Endothelial cell of umbilical vein (primary cell): ENCODE measurements at regions of chr14 and their contacts with region 1.

Region 1: DNA sequence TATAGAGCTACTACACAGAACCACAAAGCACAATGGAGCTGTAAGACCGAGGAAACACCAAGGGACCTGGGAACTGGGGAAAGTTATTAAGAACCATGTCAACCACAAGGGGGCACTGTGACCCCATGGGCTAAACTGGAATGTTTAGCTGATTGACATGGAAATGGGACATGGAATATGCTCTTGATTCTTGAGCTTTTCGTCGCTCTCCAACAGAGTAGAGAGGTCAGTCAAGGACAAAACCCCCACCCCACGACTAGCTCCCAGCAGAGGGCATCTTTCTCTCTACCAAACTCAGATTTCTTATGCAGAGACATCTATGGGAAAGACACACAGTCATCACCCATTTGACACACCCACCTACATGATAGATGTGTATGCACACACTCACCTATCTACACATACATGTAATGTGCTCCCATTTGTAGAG is 10.1 kb downstream of the NDRG2 start:
- DNase-seq: peak; percentile 83
- H3K4me3 ChIP-seq: no peak overlapping the region
- H3K27ac ChIP-seq: no peak overlapping the region
- H3K4me1 ChIP-seq: no peaks in the 10 kb centered on the region
- H3K27me3 ChIP-seq: peaks cover 19 to 23% of the 10 kb centered on the region in 2 experiments
- CTCF ChIP-seq: peak; percentile 77 to 78
- POLR2A ChIP-seq: no peak

Region 2: DNA sequence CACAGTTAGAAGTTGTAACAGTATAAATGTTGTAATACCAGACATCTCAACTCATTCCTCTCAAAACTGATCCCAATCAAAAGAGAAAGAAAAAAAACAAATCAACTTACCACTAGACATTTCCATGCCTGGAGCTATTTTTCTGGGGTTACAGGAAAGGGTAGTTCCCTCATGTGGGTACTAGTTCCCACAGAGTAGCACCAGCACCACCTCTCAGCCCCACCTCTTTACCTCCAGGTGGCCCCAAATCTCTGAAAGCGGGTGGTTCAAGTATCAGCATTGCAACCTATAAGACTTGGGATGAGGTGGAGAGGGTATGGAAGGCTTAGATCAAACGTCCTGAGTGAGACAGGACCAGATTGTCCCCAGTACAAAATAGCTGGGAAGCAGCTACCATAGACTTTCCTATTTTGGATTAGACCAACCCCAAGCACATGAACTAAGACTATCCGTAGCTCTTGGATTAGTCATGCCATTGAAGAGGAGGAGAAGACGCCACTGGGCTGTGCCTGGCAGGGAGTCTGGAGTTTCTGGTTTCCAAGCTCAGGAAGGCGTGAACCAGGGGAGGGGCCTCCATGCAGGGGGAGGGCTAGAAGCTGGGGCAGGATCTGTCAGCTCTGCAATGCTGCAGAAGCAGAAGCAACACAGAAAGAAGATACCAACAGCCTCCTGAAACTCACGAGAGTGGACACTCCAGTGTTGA is 16.0 kb before region 1 on chr14 and contains the start of gene SLC39A2:
- CTCF ChIA-PET with region 1: interaction called, 23 read pairs
- POLR2A ChIA-PET with region 1: no interaction called
- dilution Hi-C with region 1: no loop called
- intact Hi-C with region 1: no loop called
- DNase-seq: no peak
- H3K4me3 ChIP-seq: no peak within 1 kb of the TSS
- H3K27ac ChIP-seq: no peak within 1 kb of the TSS
- H3K4me1 ChIP-seq: no peaks in the 10 kb centered on the region
- H3K27me3 ChIP-seq: no peaks in the 10 kb centered on the region
- CTCF ChIP-seq: no peak
- POLR2A ChIP-seq: no peak
- total RNA-seq, gene SLC39A2: not detected in 2 replicates

Region 3: DNA sequence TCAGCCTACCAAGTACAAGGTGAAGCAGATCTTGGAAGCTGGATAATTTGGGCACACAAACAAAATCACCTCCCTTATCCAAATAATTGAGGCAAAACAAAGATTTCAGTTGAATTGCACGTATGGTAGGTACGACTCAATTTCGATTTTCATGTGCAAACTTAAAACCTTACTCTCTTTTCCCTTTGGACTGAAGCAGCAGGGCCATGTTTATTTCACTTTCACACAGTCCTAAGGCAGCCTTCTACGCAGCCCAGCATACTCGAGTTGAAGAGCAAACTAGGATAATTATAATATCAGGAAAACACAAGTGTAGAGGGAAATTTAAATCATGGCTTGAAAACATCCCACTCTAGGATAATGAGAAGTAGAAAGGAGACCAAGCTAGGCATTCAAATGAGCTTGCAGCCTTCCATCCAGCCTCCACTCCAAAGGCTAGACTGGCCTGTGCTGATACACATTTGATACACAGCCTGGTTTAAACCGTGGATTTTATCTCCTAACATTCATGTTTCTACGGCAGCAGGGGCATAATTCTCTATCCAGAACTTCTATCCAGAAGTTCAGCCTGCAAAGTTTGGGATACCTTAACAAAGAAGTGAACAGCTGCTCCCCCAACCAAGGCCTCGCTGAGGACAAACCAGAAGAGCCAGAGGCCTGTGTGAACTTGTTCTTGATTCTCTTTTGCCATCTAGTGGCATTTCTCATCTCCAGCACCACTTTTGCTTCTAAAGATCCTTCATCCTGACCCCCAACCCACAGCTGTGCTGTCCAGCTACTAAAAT is 25.0 kb after region 1 on chr14:
- CTCF ChIA-PET with region 1: interaction called, 214 read pairs
- POLR2A ChIA-PET with region 1: no interaction called
- dilution Hi-C with region 1: no loop called
- intact Hi-C with region 1: loop called (anchors 1 kb)
- DNase-seq: peak; percentile 46
- H3K4me3 ChIP-seq: no peak overlapping the region
- H3K27ac ChIP-seq: no peak overlapping the region
- H3K4me1 ChIP-seq: peaks cover 4% of the 10 kb centered on the region
- H3K27me3 ChIP-seq: peaks cover 10 to 15% of the 10 kb centered on the region in 2 experiments
- CTCF ChIP-seq: peak; percentile 41 to 59
- POLR2A ChIP-seq: no peak

Region 4: GRCh38 chr14:21071225-21072030 is 56.7 kb after region 1 on chr14:
- CTCF ChIA-PET with region 1: interaction called, 33 read pairs
- POLR2A ChIA-PET with region 1: no interaction called
- dilution Hi-C with region 1: no loop called
- intact Hi-C with region 1: loop called (anchors 1 kb)
- DNase-seq: peak; percentile 84
- H3K4me3 ChIP-seq: peak overlapping the region in 2 of 3 experiments; percentile 54 to 55
- H3K27ac ChIP-seq: no peak overlapping the region
- H3K4me1 ChIP-seq: peaks cover 10% of the 10 kb centered on the region
- H3K27me3 ChIP-seq: peaks cover 16 to 38% of the 10 kb centered on the region in 2 experiments
- CTCF ChIP-seq: no peak
- POLR2A ChIP-seq: no peak

Region 5: DNA sequence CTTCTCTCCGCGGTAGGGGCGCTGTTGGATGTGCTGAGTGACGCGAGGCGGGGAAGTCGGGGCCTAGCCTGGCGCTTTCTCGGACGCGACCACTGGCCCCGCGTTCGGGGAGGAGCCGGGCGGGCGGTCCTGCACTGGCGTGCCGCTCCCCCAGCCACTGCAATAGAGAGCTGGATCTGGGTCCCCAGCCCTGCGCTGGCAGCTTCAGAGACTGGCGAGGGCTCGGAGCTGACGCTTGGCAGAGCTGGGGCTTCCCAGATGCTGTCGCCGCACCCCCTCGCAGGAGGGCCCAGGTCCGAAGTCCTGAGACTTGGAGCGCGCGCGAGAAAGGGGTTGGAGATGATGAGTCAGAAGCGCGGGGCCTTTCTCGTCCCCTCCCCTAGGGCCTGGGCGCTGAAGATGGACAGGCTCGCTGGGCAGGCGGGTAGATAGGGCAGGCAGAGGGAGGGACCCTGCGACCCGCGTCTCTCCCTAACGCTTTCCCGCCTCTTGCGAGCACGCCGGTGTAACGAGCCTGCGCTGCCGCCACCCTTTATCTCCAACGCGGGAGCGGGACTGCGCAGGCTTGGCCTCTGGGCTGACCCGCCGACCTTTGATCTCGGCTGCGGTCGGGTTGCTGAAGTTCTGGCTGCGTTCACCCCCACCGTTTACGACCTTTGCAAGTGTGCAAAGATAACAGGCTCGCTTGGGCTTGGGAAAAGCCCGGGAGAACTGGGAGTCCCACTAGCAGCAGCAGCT is 89.1 kb after region 1 on chr14:
- CTCF ChIA-PET with region 1: interaction called, 310 read pairs
- POLR2A ChIA-PET with region 1: interaction called, 3 read pairs
- dilution Hi-C with region 1: no loop called
- intact Hi-C with region 1: loop called (anchors 1 kb)
- DNase-seq: peak; percentile 94
- H3K4me3 ChIP-seq: peak overlapping the region in 2 of 3 experiments; percentile 47 to 60
- H3K27ac ChIP-seq: peak overlapping the region; percentile 93
- H3K4me1 ChIP-seq: peaks cover 20% of the 10 kb centered on the region
- H3K27me3 ChIP-seq: peaks cover 12 to 18% of the 10 kb centered on the region in 2 experiments
- CTCF ChIP-seq: peak; percentile 82 to 85
- POLR2A ChIP-seq: peak; percentile 77